CD4-positive, alpha-beta memory T cell (primary cell): ENCODE measurements at regions of chr2 and their contacts with region 1.

Region 1: GRCh38 chr2:95022309-95023221 is 2.9 kb upstream of the MAL start:
- DNase-seq: peak; percentile 76 to 80 (median 79)
- H3K4me3 ChIP-seq: no peak overlapping the region
- H3K4me3 Mint-ChIP-seq: peak overlapping the region; percentile 57 to 95 (median 74)
- H3K27ac ChIP-seq: peak overlapping the region; percentile 27
- H3K27ac Mint-ChIP-seq: peak overlapping the region; percentile 72 to 98 (median 88)
- H3K4me1 ChIP-seq: peaks cover 47% of the 10 kb centered on the region
- H3K4me1 Mint-ChIP-seq: peaks cover 24 to 59% (median 42%) of the 10 kb centered on the region in 4 donors
- H3K27me3 ChIP-seq: no peaks in the 10 kb centered on the region
- H3K27me3 Mint-ChIP-seq: no peaks in the 10 kb centered on the region

Region 2: DNA sequence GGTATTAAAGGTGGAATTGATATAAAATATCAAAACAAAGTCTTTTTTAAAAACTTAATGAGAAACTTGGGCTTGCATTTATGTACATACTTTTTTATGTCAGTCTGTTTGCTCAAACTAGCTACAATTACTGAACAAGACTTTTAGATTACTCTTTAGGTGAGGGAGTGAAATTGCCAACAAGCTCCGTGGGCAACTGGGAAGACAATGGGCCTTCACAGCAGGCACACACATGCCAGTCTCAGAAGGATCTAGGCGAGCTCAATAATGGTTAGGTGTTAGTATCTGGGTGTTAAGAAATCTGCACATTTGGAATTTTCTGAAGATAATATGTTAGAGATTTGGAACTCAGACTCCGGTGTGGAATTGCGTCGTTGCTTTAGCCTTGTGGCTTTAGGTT is 20.1 kb before region 1 on chr2:
- CTCF ChIA-PET with region 1: no interaction called
- POLR2A ChIA-PET with region 1: no interaction called
- intact Hi-C with region 1: no loop called
- DNase-seq: no peak
- H3K4me3 ChIP-seq: no peak overlapping the region
- H3K4me3 Mint-ChIP-seq: no peak overlapping the region
- H3K27ac ChIP-seq: no peak overlapping the region
- H3K27ac Mint-ChIP-seq: no peak overlapping the region
- H3K4me1 ChIP-seq: no peaks in the 10 kb centered on the region
- H3K4me1 Mint-ChIP-seq: peaks cover 0 to 6% (median 4%) of the 10 kb centered on the region in 4 donors
- H3K27me3 ChIP-seq: no peaks in the 10 kb centered on the region
- H3K27me3 Mint-ChIP-seq: peaks cover 3 to 11% of the 10 kb centered on the region in 2 donors

Region 3: GRCh38 chr2:95034221-95034620 is 11.7 kb after region 1 on chr2:
- CTCF ChIA-PET with region 1: interaction called, 22 read pairs
- POLR2A ChIA-PET with region 1: interaction called, 15 read pairs
- intact Hi-C with region 1: no loop called
- DNase-seq: no peak
- H3K4me3 ChIP-seq: no peak overlapping the region
- H3K4me3 Mint-ChIP-seq: no peak overlapping the region
- H3K27ac ChIP-seq: no peak overlapping the region
- H3K27ac Mint-ChIP-seq: peak overlapping the region in 4 of 7 donors; percentile 10 to 85 (median 34)
- H3K4me1 ChIP-seq: peaks cover 75% of the 10 kb centered on the region
- H3K4me1 Mint-ChIP-seq: peaks cover 40 to 92% (median 71%) of the 10 kb centered on the region in 4 donors
- H3K27me3 ChIP-seq: no peaks in the 10 kb centered on the region
- H3K27me3 Mint-ChIP-seq: no peaks in the 10 kb centered on the region

Region 4: DNA sequence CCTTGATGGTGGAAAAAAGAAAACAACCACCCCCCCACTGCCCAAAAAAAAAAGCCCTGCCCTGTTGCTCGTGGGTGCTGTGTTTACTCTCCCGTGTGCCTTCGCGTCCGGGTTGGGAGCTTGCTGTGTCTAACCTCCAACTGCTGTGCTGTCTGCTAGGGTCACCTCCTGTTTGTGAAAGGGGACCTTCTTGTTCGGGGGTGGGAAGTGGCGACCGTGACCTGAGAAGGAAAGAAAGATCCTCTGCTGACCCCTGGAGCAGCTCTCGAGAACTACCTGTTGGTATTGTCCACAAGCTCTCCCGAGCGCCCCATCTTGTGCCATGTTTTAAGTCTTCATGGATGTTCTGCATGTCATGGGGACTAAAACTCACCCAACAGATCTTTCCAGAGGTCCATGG is 31.0 kb after region 1 on chr2:
- CTCF ChIA-PET with region 1: interaction called, 61 read pairs
- POLR2A ChIA-PET with region 1: interaction called, 61 read pairs
- intact Hi-C with region 1: loop called (anchors 1 kb)
- DNase-seq: no peak
- H3K4me3 ChIP-seq: no peak overlapping the region
- H3K4me3 Mint-ChIP-seq: peak overlapping the region in 2 of 8 donors; percentile 4 to 22
- H3K27ac ChIP-seq: no peak overlapping the region
- H3K27ac Mint-ChIP-seq: peak overlapping the region; percentile 22 to 87 (median 66)
- H3K4me1 ChIP-seq: peaks cover 42% of the 10 kb centered on the region
- H3K4me1 Mint-ChIP-seq: peaks cover 25 to 70% (median 45%) of the 10 kb centered on the region in 4 donors
- H3K27me3 ChIP-seq: no peaks in the 10 kb centered on the region
- H3K27me3 Mint-ChIP-seq: no peaks in the 10 kb centered on the region

Region 5: GRCh38 chr2:95069465-95069864 is 46.9 kb after region 1 on chr2:
- CTCF ChIA-PET with region 1: interaction called, 765 read pairs
- POLR2A ChIA-PET with region 1: interaction called, 647 read pairs
- intact Hi-C with region 1: no loop called
- DNase-seq: no peak
- H3K4me3 ChIP-seq: no peak overlapping the region
- H3K4me3 Mint-ChIP-seq: no peak overlapping the region
- H3K27ac ChIP-seq: no peak overlapping the region
- H3K27ac Mint-ChIP-seq: peak overlapping the region in 1 of 7 donors; percentile 37
- H3K4me1 ChIP-seq: peaks cover 22% of the 10 kb centered on the region
- H3K4me1 Mint-ChIP-seq: peaks cover 11 to 30% (median 25%) of the 10 kb centered on the region in 4 donors
- H3K27me3 ChIP-seq: no peaks in the 10 kb centered on the region
- H3K27me3 Mint-ChIP-seq: no peaks in the 10 kb centered on the region

Region 6: GRCh38 chr2:95121407-95122196 is 99.0 kb after region 1 on chr2 and contains the start of gene MRPS5:
- CTCF ChIA-PET with region 1: interaction called, 279 read pairs
- POLR2A ChIA-PET with region 1: interaction called, 78 read pairs
- intact Hi-C with region 1: no loop called
- DNase-seq: peak; percentile 77 to 86 (median 78)
- H3K4me3 ChIP-seq: peak within 1 kb of the TSS; percentile 74 to 76
- H3K4me3 Mint-ChIP-seq: peak within 1 kb of the TSS; percentile 94 to 99 (median 96)
- H3K27ac ChIP-seq: peak within 1 kb of the TSS; percentile 79
- H3K27ac Mint-ChIP-seq: peak within 1 kb of the TSS; percentile 89 to 97 (median 95)
- H3K4me1 ChIP-seq: peaks cover 36% of the 10 kb centered on the region
- H3K4me1 Mint-ChIP-seq: peaks cover 36 to 55% (median 42%) of the 10 kb centered on the region in 4 donors
- H3K27me3 ChIP-seq: no peaks in the 10 kb centered on the region
- H3K27me3 Mint-ChIP-seq: peaks cover 0 to 2% of the 10 kb centered on the region in 2 donors
- total RNA-seq, gene MRPS5: 66.0 to 70.6 TPM

Region 7: GRCh38 chr2:95165129-95166064 is 142.8 kb after region 1 on chr2 and contains the start of gene ZNF2:
- CTCF ChIA-PET with region 1: interaction called, 4 read pairs
- POLR2A ChIA-PET with region 1: interaction called, 18 read pairs
- intact Hi-C with region 1: loop called (anchors 1 kb)
- DNase-seq: peak; percentile 95 to 98 (median 96)
- H3K4me3 ChIP-seq: peak within 1 kb of the TSS; percentile 88 to 97
- H3K4me3 Mint-ChIP-seq: peak within 1 kb of the TSS; percentile 95 to 100 (median 100)
- H3K27ac ChIP-seq: peak within 1 kb of the TSS; percentile 89
- H3K27ac Mint-ChIP-seq: peak within 1 kb of the TSS; percentile 94 to 99 (median 98)
- H3K4me1 ChIP-seq: peaks cover 21% of the 10 kb centered on the region
- H3K4me1 Mint-ChIP-seq: peaks cover 24 to 40% (median 35%) of the 10 kb centered on the region in 4 donors
- H3K27me3 ChIP-seq: no peaks in the 10 kb centered on the region
- H3K27me3 Mint-ChIP-seq: no peaks in the 10 kb centered on the region
- total RNA-seq, gene ZNF2: 8.3 to 10.1 TPM